ENCODE measurements at regions of chr7 and their contacts with region 1.

Region 1: DNA sequence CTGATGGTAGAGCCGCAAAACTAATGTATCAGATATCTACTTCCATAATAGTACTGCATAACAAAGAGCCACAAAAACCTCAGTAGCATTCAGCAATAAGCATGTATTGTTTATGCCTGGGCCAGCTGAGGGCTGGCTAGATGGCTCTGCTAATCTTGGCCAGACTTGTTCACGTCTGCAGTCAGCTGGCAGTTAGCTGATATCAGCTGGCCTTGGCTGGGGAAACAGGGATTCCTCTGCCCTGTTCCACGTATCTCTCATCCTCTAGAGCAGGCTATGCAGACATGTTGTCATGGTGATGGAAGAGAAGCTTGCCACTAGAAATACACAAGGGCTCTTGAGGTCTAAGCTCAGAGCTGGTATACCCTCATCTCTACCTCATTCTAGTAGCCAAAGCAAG is 62.9 kb downstream of the GRM8 start:
- DNase-seq: no peak
- ATAC-seq: no peak
- H3K4me3 ChIP-seq: no peak overlapping the region
- H3K27ac ChIP-seq: no peak overlapping the region
- H3K4me1 ChIP-seq: no peaks in the 10 kb centered on the region
- H3K27me3 ChIP-seq: no peaks in the 10 kb centered on the region; the same call in 1 of the 2 replicates
- CTCF ChIP-seq: no peak

Region 2: GRCh38 chr7:126557271-126557670 is 632.6 kb before region 1 on chr7:
- CTCF ChIA-PET with region 1: interaction called, 12 read pairs
- POLR2A ChIA-PET with region 1: no interaction called
- in situ Hi-C with region 1: no loop called
- intact Hi-C with region 1: no loop called
- DNase-seq: no peak
- ATAC-seq: no peak
- H3K4me3 ChIP-seq: no peak overlapping the region
- H3K27ac ChIP-seq: no peak overlapping the region
- H3K4me1 ChIP-seq: no peaks in the 10 kb centered on the region
- H3K27me3 ChIP-seq: no peaks in the 10 kb centered on the region
- CTCF ChIP-seq: no peak

Region 3: GRCh38 chr7:127245607-127246006 is 55.7 kb after region 1 on chr7:
- CTCF ChIA-PET with region 1: no interaction called
- POLR2A ChIA-PET with region 1: no interaction called
- in situ Hi-C with region 1: no loop called
- intact Hi-C with region 1: no loop called
- DNase-seq: no peak
- ATAC-seq: no peak
- H3K4me3 ChIP-seq: no peak overlapping the region
- H3K27ac ChIP-seq: no peak overlapping the region
- H3K4me1 ChIP-seq: no peaks in the 10 kb centered on the region
- H3K27me3 ChIP-seq: peaks cover 25% of the 10 kb centered on the region
- CTCF ChIP-seq: no peak

Measured in Panc1 (cell line).